GM13977 (cell line): ENCODE measurements at regions of chr9 and their contacts with region 1.

Region 1: GRCh38 chr9:1604942-1605560 is 410.1 kb upstream of the SMARCA2 start:
- DNase-seq: peak; percentile 45
- CTCF ChIP-seq: peak; percentile 81

Region 2: DNA sequence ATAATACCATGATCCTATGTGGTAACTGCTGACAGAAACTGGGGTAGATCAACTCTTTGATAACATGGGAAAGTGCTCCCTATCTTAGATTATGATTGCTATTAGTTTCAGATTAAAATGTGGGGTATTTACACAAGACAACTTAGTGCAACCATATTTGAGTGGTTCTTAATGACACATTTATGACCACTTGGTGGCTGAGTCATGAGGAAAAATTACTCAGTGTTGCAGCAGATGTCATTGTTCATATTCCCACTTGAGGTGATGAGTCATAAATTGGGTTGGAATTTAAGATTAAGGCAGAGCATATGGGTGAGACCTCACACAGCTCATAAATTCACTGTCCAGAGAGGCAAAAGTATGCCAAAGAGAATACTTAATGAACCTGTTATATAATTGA is 146.6 kb before region 1 on chr9:
- in situ Hi-C with region 1: loop called (anchors 10 kb)
- DNase-seq: no peak
- CTCF ChIP-seq: no peak

Region 3: DNA sequence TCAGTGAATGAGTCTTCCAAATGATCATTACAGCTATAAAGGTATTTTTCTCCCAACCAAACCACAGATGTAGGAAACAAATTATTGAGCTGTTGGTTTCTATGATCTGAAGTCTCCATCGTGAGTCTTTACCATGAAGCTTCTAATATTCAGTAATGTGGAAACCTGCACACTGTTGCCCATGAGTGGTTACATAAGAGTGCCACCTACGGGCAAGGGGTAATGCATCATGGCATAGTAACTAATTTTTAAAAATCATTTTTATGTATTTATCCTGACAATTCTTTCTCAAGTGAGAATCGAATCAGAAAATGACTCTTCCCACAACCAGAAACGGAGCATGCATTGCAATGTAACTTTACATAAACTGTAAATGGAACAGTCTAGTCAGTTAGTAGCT is 127.6 kb after region 1 on chr9:
- in situ Hi-C with region 1: no loop called
- DNase-seq: no peak
- CTCF ChIP-seq: peak; percentile 38